ENCODE measurements at regions of chr1 and their contacts with region 1.

Region 1: DNA sequence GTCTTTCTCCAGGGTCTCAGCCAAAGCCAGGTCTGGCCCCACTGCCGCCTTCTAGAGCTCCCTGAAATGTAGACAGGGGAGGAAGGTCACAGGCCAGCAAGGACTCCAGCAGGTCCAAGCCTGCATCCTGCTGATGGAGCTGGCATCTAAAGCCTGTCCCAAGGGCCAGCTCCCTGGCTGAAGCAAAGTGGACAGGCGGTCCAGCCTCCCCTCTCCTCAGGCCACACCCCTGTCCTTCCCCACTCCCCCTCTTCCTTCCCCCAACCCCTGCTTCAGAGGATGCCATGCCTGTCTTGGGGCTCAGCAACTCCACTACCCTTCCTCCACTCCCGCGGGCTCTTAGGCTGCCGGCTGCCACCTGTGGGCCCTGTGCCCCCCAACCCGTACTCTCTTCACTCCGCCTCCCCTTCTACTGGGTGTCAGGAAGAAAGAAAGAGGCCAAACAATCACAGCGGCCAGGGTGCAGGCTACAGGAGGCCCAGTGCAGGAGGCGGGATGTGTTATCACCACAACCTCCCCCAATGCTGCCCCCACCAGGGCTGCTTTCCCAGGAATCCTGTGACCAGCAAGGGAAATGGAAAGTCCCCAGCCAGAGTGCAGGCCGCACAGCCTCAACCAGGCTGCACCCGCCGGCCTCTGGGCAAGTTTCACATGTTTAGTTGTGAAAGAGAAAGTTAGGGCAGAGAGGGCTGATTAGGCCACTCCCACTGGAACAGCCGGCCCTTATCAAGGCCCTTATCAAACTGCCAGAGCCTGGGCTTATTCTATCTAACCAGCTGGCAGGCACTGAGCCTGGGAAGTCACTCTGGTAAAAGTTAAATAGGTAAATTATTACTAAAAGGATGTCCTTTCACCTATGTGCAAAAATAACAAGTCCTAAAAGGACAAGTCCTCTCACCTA is 34.1 kb downstream of the ACOT7 start:
- DNase-seq: peak; percentile 50 to 69 (median 58)
- ATAC-seq: peak; percentile 79
- H3K4me3 ChIP-seq: 0 out of 2 replicates have a peak overlapping the region, but pooled peaks have one; percentile 6
- H3K27ac ChIP-seq: peak overlapping the region; percentile 69; the same call in 1 of the 3 replicates
- H3K4me1 ChIP-seq: peaks cover 31 to 45% of the 10 kb centered on the region in 2 experiments
- H3K27me3 ChIP-seq: no peaks in the 10 kb centered on the region
- CTCF ChIP-seq: no peak
- EP300 ChIP-seq: peak; percentile 90
- POLR2A ChIP-seq: no peak
- RAD21 ChIP-seq: no peak

Region 2: DNA sequence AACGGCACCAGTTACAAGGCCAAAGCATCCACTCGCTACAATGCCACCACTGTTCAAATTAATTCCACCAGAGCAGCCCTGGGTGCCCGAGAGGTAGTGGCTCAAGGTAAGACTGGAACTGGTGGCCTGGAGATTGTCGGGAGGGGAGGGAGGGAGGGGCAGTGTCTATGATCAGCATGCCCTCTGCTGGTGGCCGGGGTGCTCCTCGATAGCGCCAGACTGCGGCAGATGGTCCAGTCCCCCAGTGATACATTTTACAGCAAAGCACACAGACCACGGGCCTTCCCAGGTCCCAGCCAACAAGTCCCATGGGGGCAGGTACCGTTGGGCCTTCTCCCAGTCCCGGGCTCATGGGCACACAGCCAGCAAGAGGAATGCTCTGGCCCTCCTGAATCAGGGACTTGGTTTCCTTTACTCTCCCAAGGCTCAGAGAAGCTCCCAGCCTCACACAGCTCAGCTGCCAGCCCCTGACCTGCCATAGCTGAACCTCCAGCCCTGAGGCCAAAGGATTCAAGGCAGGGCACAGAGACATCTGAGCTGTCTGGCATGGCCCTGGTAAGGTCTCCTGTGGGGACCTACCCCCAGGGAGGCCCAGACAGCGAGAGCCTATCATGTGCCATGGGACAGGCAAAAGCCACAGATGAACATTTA is 18.8 kb after region 1 on chr1:
- CTCF ChIA-PET with region 1: interaction called, 6 read pairs
- POLR2A ChIA-PET with region 1: interaction called, 4 read pairs
- in situ Hi-C with region 1: no loop called
- intact Hi-C with region 1: loop called (anchors 2 kb)
- DNase-seq: peak; percentile 61 to 76 (median 71)
- ATAC-seq: peak; percentile 98
- H3K4me3 ChIP-seq: no peak overlapping the region
- H3K27ac ChIP-seq: no peak overlapping the region
- H3K4me1 ChIP-seq: peaks cover 0 to 13% of the 10 kb centered on the region in 2 experiments; a peak in 2 of 5 replicates
- H3K27me3 ChIP-seq: no peaks in the 10 kb centered on the region
- CTCF ChIP-seq: peak; percentile 66 to 86 (median 79)
- EP300 ChIP-seq: no peak
- POLR2A ChIP-seq: no peak
- RAD21 ChIP-seq: peak in 1 of 2 experiments; percentile 55; a peak in 2 of 4 replicates

Region 3: DNA sequence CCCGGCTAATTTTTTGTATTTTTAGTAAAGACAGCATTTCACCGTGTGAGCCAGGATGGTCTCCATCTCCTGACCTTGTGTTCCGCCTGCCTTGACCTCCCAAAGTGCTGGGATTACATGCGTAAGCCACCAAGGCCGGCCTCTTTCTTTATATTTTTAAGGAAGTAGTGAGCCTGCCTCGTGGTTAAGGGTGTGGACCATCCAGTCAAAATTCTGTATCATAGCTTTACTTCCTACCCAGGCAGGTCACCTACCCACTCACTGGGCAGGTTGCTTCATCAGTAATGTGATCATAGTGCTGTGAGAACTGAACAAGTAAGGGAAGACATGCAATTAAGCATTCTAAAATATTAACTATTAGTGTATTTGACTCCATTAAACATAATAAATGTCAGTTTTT is 42.2 kb after region 1 on chr1:
- CTCF ChIA-PET with region 1: interaction called, 32 read pairs
- POLR2A ChIA-PET with region 1: interaction called, 4 read pairs
- in situ Hi-C with region 1: no loop called
- intact Hi-C with region 1: loop called (anchors 1 kb)
- DNase-seq: no peak
- ATAC-seq: no peak
- H3K4me3 ChIP-seq: no peak overlapping the region
- H3K27ac ChIP-seq: no peak overlapping the region
- H3K4me1 ChIP-seq: peaks cover 0 to 12% of the 10 kb centered on the region in 2 experiments; a peak in 3 of 5 replicates
- H3K27me3 ChIP-seq: peaks cover 6% of the 10 kb centered on the region in 2 experiments
- CTCF ChIP-seq: no peak
- EP300 ChIP-seq: no peak
- POLR2A ChIP-seq: no peak
- RAD21 ChIP-seq: no peak